Endothelial cell of umbilical vein (primary cell): ENCODE measurements at regions of chr6 and their contacts with region 1.

Region 1: GRCh38 chr6:159862103-159862502 is 28.7 kb upstream of the MAS1 start:
- DNase-seq: no peak
- H3K4me3 ChIP-seq: no peak overlapping the region
- H3K27ac ChIP-seq: no peak overlapping the region
- H3K4me1 ChIP-seq: no peaks in the 10 kb centered on the region
- H3K27me3 ChIP-seq: no peaks in the 10 kb centered on the region
- CTCF ChIP-seq: no peak
- POLR2A ChIP-seq: no peak

Region 2: DNA sequence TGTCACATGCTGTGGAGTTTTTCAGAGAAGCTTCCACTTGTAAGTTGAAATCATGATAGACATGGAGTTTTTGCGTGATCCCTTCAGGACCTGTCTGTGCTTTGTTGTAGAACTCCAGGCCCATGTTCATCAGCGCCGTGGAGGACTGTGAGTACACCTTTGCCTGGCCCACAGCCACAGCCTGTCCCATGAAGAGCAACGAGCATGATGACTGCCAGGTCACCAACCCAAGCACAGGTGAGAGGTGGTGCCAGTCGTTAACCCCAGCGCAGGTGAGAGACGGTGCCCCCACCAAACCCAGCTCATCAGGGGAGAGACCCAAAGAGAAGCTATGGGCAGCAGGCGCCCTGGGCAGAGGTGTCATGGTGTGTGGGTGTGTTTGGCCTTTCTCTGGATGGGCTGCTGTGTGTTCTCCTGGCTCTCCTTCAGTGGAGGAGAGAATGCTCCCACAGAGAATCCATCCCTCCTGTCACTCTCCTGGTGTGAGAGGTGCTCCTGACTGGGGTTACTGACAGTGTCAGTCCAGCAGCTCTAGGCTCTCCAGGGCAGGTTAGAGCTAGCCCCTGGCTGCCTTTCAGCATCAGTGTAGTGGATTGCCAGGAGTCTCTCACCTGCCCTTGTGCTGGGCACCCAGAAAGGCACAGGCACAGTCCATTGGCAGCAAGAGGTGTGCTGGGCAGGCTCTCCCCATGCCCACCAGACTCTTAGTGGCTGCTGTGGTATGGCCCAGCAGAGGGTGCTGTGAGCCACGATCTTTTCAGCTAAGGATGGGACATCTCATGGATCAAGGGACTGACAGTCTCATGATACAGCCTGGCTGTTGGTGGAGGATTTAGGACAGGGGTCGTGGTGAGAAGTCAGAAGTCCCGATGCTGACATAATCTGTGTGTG is 209.9 kb after region 1 on chr6:
- CTCF ChIA-PET with region 1: interaction called, 11 read pairs
- POLR2A ChIA-PET with region 1: no interaction called
- dilution Hi-C with region 1: no loop called
- intact Hi-C with region 1: no loop called
- DNase-seq: no peak
- H3K4me3 ChIP-seq: no peak overlapping the region
- H3K27ac ChIP-seq: no peak overlapping the region
- H3K4me1 ChIP-seq: no peaks in the 10 kb centered on the region
- H3K27me3 ChIP-seq: no peaks in the 10 kb centered on the region
- CTCF ChIP-seq: no peak
- POLR2A ChIP-seq: no peak

Region 3: GRCh38 chr6:160102956-160103824 is 241.1 kb after region 1 on chr6:
- CTCF ChIA-PET with region 1: interaction called, 53 read pairs
- POLR2A ChIA-PET with region 1: no interaction called
- dilution Hi-C with region 1: no loop called
- intact Hi-C with region 1: loop called (anchors 1 kb)
- DNase-seq: peak; percentile 40
- H3K4me3 ChIP-seq: no peak overlapping the region
- H3K27ac ChIP-seq: no peak overlapping the region
- H3K4me1 ChIP-seq: no peaks in the 10 kb centered on the region
- H3K27me3 ChIP-seq: no peaks in the 10 kb centered on the region
- CTCF ChIP-seq: peak; percentile 41 to 59
- POLR2A ChIP-seq: no peak

Region 4: GRCh38 chr6:160221423-160221822 is 359.3 kb after region 1 on chr6:
- CTCF ChIA-PET with region 1: no interaction called
- POLR2A ChIA-PET with region 1: no interaction called
- dilution Hi-C with region 1: no loop called
- intact Hi-C with region 1: no loop called
- DNase-seq: no peak
- H3K4me3 ChIP-seq: no peak overlapping the region
- H3K27ac ChIP-seq: no peak overlapping the region
- H3K4me1 ChIP-seq: no peaks in the 10 kb centered on the region
- H3K27me3 ChIP-seq: no peaks in the 10 kb centered on the region
- CTCF ChIP-seq: no peak
- POLR2A ChIP-seq: no peak

Region 5: GRCh38 chr6:160455541-160456213 is 593.6 kb after region 1 on chr6:
- CTCF ChIA-PET with region 1: interaction called, 96 read pairs
- POLR2A ChIA-PET with region 1: no interaction called
- dilution Hi-C with region 1: no loop called
- intact Hi-C with region 1: loop called (anchors 1 kb)
- DNase-seq: peak; percentile 43
- H3K4me3 ChIP-seq: no peak overlapping the region
- H3K27ac ChIP-seq: no peak overlapping the region
- H3K4me1 ChIP-seq: no peaks in the 10 kb centered on the region
- H3K27me3 ChIP-seq: no peaks in the 10 kb centered on the region
- CTCF ChIP-seq: peak; percentile 77 to 80
- POLR2A ChIP-seq: no peak

Region 6: GRCh38 chr6:160534050-160534696 is 672.1 kb after region 1 on chr6:
- CTCF ChIA-PET with region 1: interaction called, 69 read pairs
- POLR2A ChIA-PET with region 1: no interaction called
- dilution Hi-C with region 1: no loop called
- intact Hi-C with region 1: loop called (anchors 1 kb)
- DNase-seq: peak; percentile 47
- H3K4me3 ChIP-seq: no peak overlapping the region
- H3K27ac ChIP-seq: no peak overlapping the region
- H3K4me1 ChIP-seq: no peaks in the 10 kb centered on the region
- H3K27me3 ChIP-seq: no peaks in the 10 kb centered on the region
- CTCF ChIP-seq: peak; percentile 71 to 79
- POLR2A ChIP-seq: no peak

Region 7: GRCh38 chr6:160930547-160931377 is 1068.7 kb after region 1 on chr6:
- CTCF ChIA-PET with region 1: interaction called, 14 read pairs
- POLR2A ChIA-PET with region 1: no interaction called
- dilution Hi-C with region 1: no loop called
- intact Hi-C with region 1: no loop called
- DNase-seq: peak; percentile 59
- H3K4me3 ChIP-seq: peak overlapping the region; percentile 22 to 39 (median 31)
- H3K27ac ChIP-seq: no peak overlapping the region
- H3K4me1 ChIP-seq: peaks cover 2% of the 10 kb centered on the region
- H3K27me3 ChIP-seq: peaks cover 0 to 3% of the 10 kb centered on the region in 2 experiments
- CTCF ChIP-seq: peak; percentile 87 to 94
- POLR2A ChIP-seq: no peak